ENCODE measurements at regions of chr20 and their contacts with region 1.

Region 1: DNA sequence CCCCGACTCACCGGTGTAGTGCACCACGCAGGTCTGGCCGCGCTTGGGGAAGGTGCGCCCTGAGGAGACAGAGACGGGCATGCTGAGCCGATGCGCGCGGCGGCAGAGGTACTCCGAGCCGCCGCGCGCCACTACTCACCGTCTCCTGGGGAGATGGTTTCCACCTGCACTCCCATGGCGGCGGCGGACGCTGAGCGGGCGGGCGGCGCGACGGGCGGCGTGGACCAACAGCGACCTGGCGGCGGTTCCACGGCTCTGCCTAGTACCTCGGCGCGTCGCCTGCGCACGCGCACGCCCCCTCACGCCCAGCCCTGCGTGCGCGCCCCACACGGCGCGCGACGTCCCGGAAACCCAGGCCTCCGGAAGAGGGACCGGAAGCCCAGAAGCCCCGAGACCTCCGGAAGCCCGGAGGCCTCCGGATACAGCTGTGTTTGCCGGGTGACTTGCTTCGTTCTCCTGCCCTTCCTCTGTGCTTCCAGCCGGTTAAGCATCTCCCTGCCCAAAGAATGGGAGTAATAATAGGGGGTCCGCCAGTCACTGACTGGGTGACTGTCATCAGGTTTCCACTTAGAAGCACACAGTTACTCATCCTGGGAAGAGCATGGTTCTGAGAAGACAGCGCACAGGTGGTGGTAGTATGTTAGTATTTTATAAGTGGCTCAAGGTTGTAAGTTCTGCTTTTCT is at the start of gene FKBP1A:
- DNase-seq: peak; percentile 94 to 97 (median 96)
- H3K4me3 ChIP-seq: peak within 1 kb of the TSS; percentile 53 to 93 (median 84)
- H3K27ac ChIP-seq: peak within 1 kb of the TSS; percentile 27 to 80
- H3K4me1 ChIP-seq: peaks cover 28 to 85% (median 74%) of the 10 kb centered on the region in 4 experiments
- H3K27me3 ChIP-seq: no peaks in the 10 kb centered on the region

Region 2: DNA sequence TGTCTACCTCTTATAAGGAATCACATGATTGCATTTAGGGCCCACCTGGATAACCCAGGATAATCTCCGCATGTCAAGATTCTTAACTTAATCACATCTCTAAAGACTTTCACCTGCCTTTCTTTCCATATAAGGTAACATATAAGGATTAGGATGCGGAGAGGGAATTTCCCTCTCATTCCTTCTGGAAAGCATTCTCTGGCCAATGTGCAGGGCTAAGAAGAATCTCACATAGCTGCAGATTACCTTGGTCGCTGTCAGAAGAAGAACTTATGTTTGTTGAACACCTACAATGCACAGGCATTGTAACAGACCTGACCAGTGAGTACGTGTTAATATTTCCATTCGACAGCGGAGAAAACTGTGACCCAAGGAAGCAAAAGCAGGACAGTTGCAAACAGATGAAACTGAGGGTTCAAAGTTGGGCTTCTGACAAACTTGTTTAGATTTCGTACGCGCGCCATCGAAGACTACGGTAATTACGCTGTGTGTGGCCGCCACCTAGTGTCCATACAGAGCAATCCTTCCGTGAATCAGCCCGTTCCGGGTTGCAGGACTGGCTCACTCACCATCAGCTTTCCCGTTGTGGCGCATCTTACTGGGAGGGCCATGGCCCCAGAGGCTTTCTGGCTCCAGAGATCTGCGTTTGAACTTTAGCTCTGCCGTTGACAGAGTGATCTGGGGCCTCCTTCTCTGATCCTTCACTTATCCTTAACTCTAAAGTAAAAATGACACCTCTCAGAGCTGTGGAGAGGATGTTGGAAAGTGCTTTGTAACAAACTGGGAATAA is 180.2 kb before region 1 on chr20:
- CTCF ChIA-PET with region 1: no interaction called
- POLR2A ChIA-PET with region 1: no interaction called
- DNase-seq: peak; percentile 68 to 84 (median 81)
- H3K4me3 ChIP-seq: peak overlapping the region in 1 of 7 experiments; percentile 7
- H3K27ac ChIP-seq: no peak overlapping the region
- H3K4me1 ChIP-seq: peaks cover 2 to 22% (median 12%) of the 10 kb centered on the region in 4 experiments
- H3K27me3 ChIP-seq: peaks cover 0 to 4% (median 0%) of the 10 kb centered on the region in 5 experiments

Region 3: GRCh38 chr20:1357921-1358671 is 34.9 kb before region 1 on chr20:
- CTCF ChIA-PET with region 1: no interaction called
- POLR2A ChIA-PET with region 1: no interaction called
- DNase-seq: peak in 2 of 3 donors; percentile 28 to 39
- H3K4me3 ChIP-seq: no peak overlapping the region
- H3K27ac ChIP-seq: no peak overlapping the region
- H3K4me1 ChIP-seq: peaks cover 0 to 6% (median 2%) of the 10 kb centered on the region in 4 experiments
- H3K27me3 ChIP-seq: no peaks in the 10 kb centered on the region

Region 4: DNA sequence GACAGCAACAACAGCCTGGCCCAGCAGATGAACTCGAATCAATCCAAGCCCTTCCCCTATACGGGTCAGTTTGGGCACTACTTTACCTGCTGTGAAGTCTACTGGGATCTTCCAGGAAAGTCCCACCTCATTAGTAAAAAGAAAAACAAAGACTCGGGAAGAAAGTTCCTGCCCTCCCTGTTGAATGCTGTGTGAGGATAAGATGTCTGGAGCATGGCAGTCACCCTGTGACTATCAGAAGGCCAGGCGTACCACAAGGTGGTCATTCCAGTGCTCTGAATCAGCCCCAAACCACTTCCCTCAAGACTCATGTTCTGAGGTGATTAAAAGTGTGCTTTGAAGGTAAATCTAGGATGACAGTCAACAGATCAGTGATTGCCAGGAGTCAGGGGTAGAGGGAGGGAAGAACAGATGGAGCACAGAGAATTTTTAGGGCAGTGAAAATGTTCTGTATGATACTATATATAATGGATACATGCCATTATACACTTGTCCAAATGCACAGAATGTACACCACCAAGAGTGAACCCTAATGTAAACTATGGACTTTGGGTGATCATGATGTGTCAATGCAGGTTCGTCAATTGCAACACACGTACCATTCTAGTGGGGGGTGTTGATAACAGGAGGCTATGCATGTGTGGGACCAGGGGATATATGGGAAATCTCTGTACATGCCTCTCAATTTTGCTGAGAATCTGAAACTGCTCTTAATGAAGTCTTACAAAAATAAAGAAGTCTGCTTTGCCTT is 14.8 kb before region 1 on chr20:
- CTCF ChIA-PET with region 1: interaction called, 16 read pairs
- POLR2A ChIA-PET with region 1: interaction called, 9 read pairs
- DNase-seq: no peak
- H3K4me3 ChIP-seq: no peak overlapping the region
- H3K27ac ChIP-seq: no peak overlapping the region
- H3K4me1 ChIP-seq: peaks cover 42 to 78% (median 59%) of the 10 kb centered on the region in 4 experiments
- H3K27me3 ChIP-seq: no peaks in the 10 kb centered on the region

Region 5: DNA sequence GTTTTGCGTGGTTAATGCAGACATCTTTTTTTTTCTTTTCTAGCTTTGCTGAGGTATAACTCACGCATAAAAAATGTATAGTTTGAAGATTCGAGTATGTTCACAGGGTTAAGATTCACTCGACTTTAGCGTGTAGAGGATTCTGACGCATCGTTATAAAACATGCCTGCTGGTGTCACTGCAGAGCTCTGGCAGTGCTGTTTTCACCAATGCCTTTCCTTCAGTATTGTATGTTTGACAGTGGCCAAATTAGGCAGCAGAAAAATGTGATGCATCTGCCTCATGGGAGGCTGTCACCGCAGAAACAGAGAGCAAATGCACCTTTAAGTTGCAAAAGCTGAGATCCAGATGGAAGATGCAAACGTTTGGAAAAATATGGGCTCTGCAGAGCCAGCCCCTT is 116.3 kb after region 1 on chr20:
- CTCF ChIA-PET with region 1: no interaction called
- POLR2A ChIA-PET with region 1: no interaction called
- DNase-seq: peak; percentile 56 to 80 (median 79)
- H3K4me3 ChIP-seq: no peak overlapping the region
- H3K27ac ChIP-seq: no peak overlapping the region
- H3K4me1 ChIP-seq: peaks cover 0 to 5% (median 1%) of the 10 kb centered on the region in 4 experiments
- H3K27me3 ChIP-seq: no peaks in the 10 kb centered on the region

Measured in common myeloid progenitor, CD34-positive (primary cell).